Natural killer cell (primary cell): ENCODE measurements at regions of chr6 and their contacts with region 1.

Region 1: GRCh38 chr6:33454009-33454946 is at the start of gene ZBTB9:
- DNase-seq: peak; percentile 94 to 96
- ATAC-seq: peak; percentile 98 to 100 (median 99)
- H3K4me3 ChIP-seq: peak within 1 kb of the TSS; percentile 62
- H3K4me3 Mint-ChIP-seq: peak within 1 kb of the TSS; percentile 97
- H3K27ac ChIP-seq: peak within 1 kb of the TSS; percentile 46
- H3K27ac Mint-ChIP-seq: peak within 1 kb of the TSS; percentile 89 to 98
- H3K4me1 ChIP-seq: peaks cover 23% of the 10 kb centered on the region
- H3K4me1 Mint-ChIP-seq: peaks cover 28 to 42% of the 10 kb centered on the region in 2 donors
- H3K27me3 ChIP-seq: no peaks in the 10 kb centered on the region
- H3K27me3 Mint-ChIP-seq: no peaks in the 10 kb centered on the region
- CTCF ChIP-seq: no peak
- total RNA-seq, gene ZBTB9: 3.8 to 5.1 (median 3.9) TPM

Region 2: GRCh38 chr6:33199680-33200218 is 254.5 kb before region 1 on chr6:
- intact Hi-C with region 1: no loop called
- DNase-seq: peak in 1 of 2 donors; percentile 77
- ATAC-seq: peak; percentile 21 to 48 (median 24)
- H3K4me3 ChIP-seq: peak overlapping the region; percentile 99
- H3K4me3 Mint-ChIP-seq: peak overlapping the region; percentile 89
- H3K27ac ChIP-seq: peak overlapping the region; percentile 99
- H3K27ac Mint-ChIP-seq: peak overlapping the region; percentile 98
- H3K4me1 ChIP-seq: peaks cover 37% of the 10 kb centered on the region
- H3K4me1 Mint-ChIP-seq: peaks cover 66 to 85% of the 10 kb centered on the region in 2 donors
- H3K27me3 ChIP-seq: no peaks in the 10 kb centered on the region
- H3K27me3 Mint-ChIP-seq: no peaks in the 10 kb centered on the region
- CTCF ChIP-seq: no peak

Region 3: DNA sequence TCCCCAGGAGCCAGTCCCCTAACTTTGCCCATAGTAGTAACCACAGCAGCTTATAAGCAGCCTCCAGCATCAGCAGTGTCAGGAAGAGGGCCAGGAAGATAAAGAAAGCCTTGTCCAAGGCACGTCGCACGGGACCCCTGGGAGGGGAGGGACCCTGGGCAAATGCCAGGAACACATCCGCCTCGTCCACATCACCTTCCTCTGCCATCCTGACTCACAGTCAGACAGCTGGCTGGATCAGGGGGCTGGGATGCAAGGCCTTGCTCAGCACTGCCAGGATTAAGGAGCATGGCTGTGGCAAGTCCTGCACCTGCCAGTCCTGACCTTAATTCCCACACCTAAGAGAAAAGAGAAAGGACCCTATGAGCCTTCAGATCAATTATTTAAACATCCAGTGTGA is 125.2 kb before region 1 on chr6:
- intact Hi-C with region 1: no loop called
- DNase-seq: no peak
- ATAC-seq: no peak
- H3K4me3 ChIP-seq: no peak overlapping the region
- H3K4me3 Mint-ChIP-seq: no peak overlapping the region
- H3K27ac ChIP-seq: no peak overlapping the region
- H3K27ac Mint-ChIP-seq: no peak overlapping the region
- H3K4me1 ChIP-seq: peaks cover 4% of the 10 kb centered on the region
- H3K4me1 Mint-ChIP-seq: peaks cover 3 to 5% of the 10 kb centered on the region in 2 donors
- H3K27me3 ChIP-seq: no peaks in the 10 kb centered on the region
- H3K27me3 Mint-ChIP-seq: no peaks in the 10 kb centered on the region
- CTCF ChIP-seq: no peak

Region 4: DNA sequence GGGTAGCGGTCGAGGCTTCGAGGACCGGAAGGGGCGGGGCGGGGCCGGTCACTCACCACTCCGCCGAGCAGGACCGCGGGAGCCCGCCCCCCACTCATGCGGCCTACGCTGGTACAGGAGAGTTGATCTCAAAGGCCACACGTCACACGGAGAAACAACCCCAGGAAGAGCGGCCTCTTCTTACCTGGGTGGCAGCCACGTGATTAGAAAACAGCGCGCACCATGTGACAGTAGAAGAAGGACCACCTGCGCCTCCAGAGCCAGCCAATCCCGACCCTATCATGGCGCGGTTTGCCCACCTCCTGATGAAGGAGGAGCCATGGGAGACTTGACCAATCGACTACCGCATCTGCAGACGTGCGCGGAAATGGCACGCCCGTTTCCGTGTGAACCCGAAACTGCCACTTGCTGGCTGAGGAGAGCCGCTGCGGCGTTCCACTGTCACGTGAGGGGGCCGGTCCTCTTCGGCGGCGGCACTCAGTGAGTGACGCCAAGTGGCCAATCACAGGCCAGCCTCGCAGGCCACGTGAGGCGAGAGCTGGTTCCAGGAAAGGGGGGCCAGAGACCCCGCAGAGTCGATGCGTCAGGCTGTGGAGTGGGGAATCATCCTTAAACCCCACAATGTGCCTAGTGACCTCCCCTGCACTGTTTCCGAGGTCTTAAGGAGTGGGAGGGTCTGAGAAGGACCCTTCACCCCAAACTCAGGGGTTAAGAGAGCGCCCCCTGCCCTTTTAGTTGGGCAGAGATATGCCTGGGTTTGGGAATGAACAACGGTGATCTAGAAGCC is 36.2 kb before region 1 on chr6 and contains the start of gene CUTA:
- intact Hi-C with region 1: loop called (anchors 5 kb)
- DNase-seq: peak; percentile 98 to 100
- ATAC-seq: peak; percentile 83 to 94 (median 84)
- H3K4me3 ChIP-seq: peak within 1 kb of the TSS; percentile 80
- H3K4me3 Mint-ChIP-seq: peak within 1 kb of the TSS; percentile 97
- H3K27ac ChIP-seq: peak within 1 kb of the TSS; percentile 95
- H3K27ac Mint-ChIP-seq: peak within 1 kb of the TSS; percentile 100
- H3K4me1 ChIP-seq: peaks cover 55% of the 10 kb centered on the region
- H3K4me1 Mint-ChIP-seq: peaks cover 55 to 72% of the 10 kb centered on the region in 2 donors
- H3K27me3 ChIP-seq: no peaks in the 10 kb centered on the region
- H3K27me3 Mint-ChIP-seq: no peaks in the 10 kb centered on the region
- CTCF ChIP-seq: no peak
- total RNA-seq, gene CUTA: 166 to 186 (median 184) TPM

Region 5: DNA sequence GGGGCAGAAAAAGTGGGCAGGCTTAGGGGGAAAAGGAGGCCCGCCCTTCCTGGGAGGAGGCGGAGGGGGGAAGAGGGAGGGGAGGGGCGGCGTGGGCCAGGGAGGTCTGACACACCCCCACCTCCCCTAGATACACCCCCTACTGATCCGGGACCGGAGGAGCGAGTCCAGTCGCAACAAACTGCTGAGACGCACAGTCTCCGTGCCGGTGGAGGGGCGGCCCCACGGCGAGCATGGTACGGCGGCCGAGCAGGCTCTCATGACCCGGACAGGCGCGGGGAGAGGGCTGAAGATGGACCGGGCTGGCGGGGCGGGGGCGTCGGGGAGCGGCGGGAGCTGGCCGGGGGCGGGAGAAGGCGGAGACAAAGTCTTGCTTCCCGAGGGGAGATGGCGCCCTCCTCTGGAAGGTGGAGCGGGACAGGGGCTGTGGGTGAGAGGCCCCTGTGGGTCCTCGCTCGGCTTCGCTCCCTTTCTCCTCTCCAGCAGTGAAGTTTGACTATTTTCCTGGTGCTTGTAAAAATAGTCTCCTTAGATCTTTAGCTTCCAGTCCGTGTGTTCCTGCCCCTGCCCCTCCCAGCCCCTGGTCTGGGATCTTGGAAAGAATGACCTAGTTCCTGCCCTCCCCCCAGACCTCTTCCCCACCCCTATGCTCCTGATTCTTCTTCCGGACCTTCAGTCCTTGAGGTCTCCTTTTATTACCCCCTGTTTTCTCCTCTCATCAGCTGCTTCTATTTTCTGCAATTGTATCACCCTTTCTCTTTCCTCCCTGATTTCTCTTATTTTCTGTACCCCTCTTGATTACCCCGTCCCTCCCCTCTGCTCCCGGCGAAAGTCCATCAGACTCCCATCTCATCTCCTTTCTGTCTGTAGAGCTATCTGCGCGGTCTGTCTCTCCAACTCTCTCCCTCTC is 28.4 kb before region 1 on chr6:
- intact Hi-C with region 1: loop called (anchors 2 kb)
- DNase-seq: peak; percentile 69 to 89
- ATAC-seq: peak; percentile 50 to 76 (median 67)
- H3K4me3 ChIP-seq: peak overlapping the region; percentile 66
- H3K4me3 Mint-ChIP-seq: peak overlapping the region; percentile 90
- H3K27ac ChIP-seq: peak overlapping the region; percentile 89
- H3K27ac Mint-ChIP-seq: peak overlapping the region; percentile 88 to 92
- H3K4me1 ChIP-seq: peaks cover 59% of the 10 kb centered on the region
- H3K4me1 Mint-ChIP-seq: peaks cover 59 to 77% of the 10 kb centered on the region in 2 donors
- H3K27me3 ChIP-seq: no peaks in the 10 kb centered on the region
- H3K27me3 Mint-ChIP-seq: no peaks in the 10 kb centered on the region
- CTCF ChIP-seq: peak; percentile 42

Region 6: DNA sequence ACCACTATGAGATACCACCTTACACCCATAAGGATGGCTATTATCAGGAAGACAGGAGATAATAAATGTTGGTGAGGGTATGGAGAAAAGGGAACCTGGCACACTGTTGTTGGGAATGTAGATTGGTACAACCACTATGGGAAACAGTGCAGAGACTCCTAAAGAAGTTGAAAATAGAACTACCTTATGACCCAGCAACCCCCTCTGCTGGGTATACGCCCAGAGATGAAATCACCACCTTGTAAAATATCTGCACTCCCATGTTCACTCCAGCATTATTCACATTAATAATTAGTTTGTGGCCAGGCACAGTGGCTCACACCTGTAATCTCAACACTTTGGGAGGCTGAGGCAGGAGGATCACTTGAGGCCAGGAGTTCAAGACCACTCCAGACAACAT is 26.9 kb after region 1 on chr6:
- intact Hi-C with region 1: no loop called
- DNase-seq: peak in 1 of 2 donors; percentile 40
- ATAC-seq: peak in 2 of 3 donors; percentile 37 to 46
- H3K4me3 ChIP-seq: no peak overlapping the region
- H3K4me3 Mint-ChIP-seq: no peak overlapping the region
- H3K27ac ChIP-seq: no peak overlapping the region
- H3K27ac Mint-ChIP-seq: no peak overlapping the region
- H3K4me1 ChIP-seq: no peaks in the 10 kb centered on the region
- H3K4me1 Mint-ChIP-seq: no peaks in the 10 kb centered on the region
- H3K27me3 ChIP-seq: no peaks in the 10 kb centered on the region
- H3K27me3 Mint-ChIP-seq: peaks cover 0 to 10% of the 10 kb centered on the region in 2 donors
- CTCF ChIP-seq: no peak

Region 7: GRCh38 chr6:33579828-33580714 is 125.8 kb after region 1 on chr6 and contains the start of gene BAK1:
- intact Hi-C with region 1: loop called (anchors 10 kb)
- DNase-seq: peak; percentile 77 to 92
- ATAC-seq: peak; percentile 96 to 98 (median 98)
- H3K4me3 ChIP-seq: peak within 1 kb of the TSS; percentile 85
- H3K4me3 Mint-ChIP-seq: peak within 1 kb of the TSS; percentile 92
- H3K27ac ChIP-seq: peak within 1 kb of the TSS; percentile 81
- H3K27ac Mint-ChIP-seq: peak within 1 kb of the TSS; percentile 91 to 99
- H3K4me1 ChIP-seq: peaks cover 35% of the 10 kb centered on the region
- H3K4me1 Mint-ChIP-seq: peaks cover 14 to 36% of the 10 kb centered on the region in 2 donors
- H3K27me3 ChIP-seq: no peaks in the 10 kb centered on the region
- H3K27me3 Mint-ChIP-seq: no peaks in the 10 kb centered on the region
- CTCF ChIP-seq: peak; percentile 47
- total RNA-seq, gene BAK1: 36.3 to 49.8 (median 40.7) TPM